Ascending aorta (tissue), 2 donors: ENCODE measurements at regions of chr2 and their contacts with region 1.

Region 1: DNA sequence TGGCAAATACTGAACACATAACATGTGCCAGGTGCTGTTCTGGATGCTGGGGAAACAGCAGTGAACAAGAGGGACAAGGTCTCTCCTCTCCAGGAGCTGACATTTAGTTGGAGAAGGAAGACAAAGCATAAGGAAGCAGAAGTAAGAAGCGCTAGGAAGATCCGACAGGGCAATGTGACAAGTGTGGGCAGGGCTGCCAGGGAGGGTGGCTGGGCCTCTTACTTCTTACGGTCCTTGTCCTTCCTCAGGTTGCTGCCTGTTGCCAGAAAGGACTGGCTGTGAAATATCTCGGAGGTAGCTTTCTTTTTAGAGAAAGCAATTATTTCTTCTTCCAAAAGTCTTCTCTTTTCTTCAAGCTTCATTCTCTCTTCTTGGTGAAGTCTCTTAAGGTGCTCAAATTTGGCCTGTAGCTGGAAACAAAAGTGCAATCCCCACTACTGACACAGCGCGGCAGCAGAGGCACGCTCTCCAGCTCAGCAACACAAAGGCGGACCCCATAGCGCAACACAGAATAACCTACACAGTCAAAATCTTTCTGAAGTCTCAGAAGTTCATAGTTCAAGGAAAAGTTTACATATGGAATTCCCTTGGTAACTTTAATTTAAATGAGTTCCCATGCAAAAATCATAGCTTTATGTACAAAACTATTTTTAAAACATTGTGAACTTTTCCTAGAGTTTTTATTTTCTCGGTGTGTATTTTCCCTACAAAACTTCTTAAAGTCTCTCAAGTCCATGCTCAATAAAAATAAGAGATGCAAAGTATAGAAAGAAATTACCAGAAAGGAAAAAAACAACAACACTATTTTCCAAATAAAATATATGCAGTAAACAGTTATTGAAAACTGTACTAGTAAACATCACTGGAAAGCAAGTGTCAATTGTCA is 67.7 kb downstream of the SEPTIN10 start:
- DNase-seq: peak in 1 of 2 donors; percentile 76
- H3K4me3 ChIP-seq: no peak overlapping the region
- H3K27ac ChIP-seq: no peak overlapping the region
- H3K4me1 ChIP-seq: peaks cover 0 to 3% of the 10 kb centered on the region in 2 donors
- H3K27me3 ChIP-seq: no peaks in the 10 kb centered on the region
- CTCF ChIP-seq: peak; percentile 91 to 96 (median 92)

Region 2: GRCh38 chr2:109084341-109084740 is 461.7 kb before region 1 on chr2:
- intact Hi-C with region 1: no loop called
- DNase-seq: peak in 1 of 2 donors; percentile 12
- H3K4me3 ChIP-seq: no peak overlapping the region
- H3K27ac ChIP-seq: no peak overlapping the region
- H3K4me1 ChIP-seq: no peaks in the 10 kb centered on the region
- H3K27me3 ChIP-seq: no peaks in the 10 kb centered on the region
- CTCF ChIP-seq: no peak

Region 3: DNA sequence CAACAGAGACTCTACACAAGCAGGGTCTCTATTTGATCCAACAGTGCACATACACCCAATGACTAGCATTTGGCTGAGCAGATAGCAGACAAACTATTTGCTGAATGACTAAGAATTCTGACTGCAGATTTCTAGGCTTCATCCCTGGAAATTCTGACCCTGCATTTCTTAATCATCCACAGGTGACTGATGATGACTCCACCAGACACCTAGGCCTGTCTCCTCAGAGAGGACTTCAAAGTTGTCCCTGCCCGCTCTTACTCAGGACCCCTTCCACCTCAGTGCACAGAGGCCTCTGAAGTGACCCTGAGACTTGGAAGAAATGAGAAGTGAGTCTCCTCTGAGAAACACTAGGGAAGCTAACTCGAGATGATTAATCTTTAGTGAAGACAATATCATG is 16.4 kb after region 1 on chr2:
- intact Hi-C with region 1: no loop called
- DNase-seq: no peak
- H3K4me3 ChIP-seq: no peak overlapping the region
- H3K27ac ChIP-seq: no peak overlapping the region
- H3K4me1 ChIP-seq: no peaks in the 10 kb centered on the region
- H3K27me3 ChIP-seq: no peaks in the 10 kb centered on the region
- CTCF ChIP-seq: no peak

Region 4: GRCh38 chr2:109715313-109715805 is 169.3 kb after region 1 on chr2:
- intact Hi-C with region 1: loop called (anchors 1 kb)
- DNase-seq: no peak
- H3K4me3 ChIP-seq: no peak overlapping the region
- H3K27ac ChIP-seq: no peak overlapping the region
- H3K4me1 ChIP-seq: no peaks in the 10 kb centered on the region
- H3K27me3 ChIP-seq: no peaks in the 10 kb centered on the region
- CTCF ChIP-seq: peak; percentile 37 to 63 (median 59)

Region 5: GRCh38 chr2:109736177-109736827 is 190.2 kb after region 1 on chr2:
- intact Hi-C with region 1: loop called (anchors 1 kb)
- DNase-seq: peak in 1 of 2 donors; percentile 83
- H3K4me3 ChIP-seq: no peak overlapping the region
- H3K27ac ChIP-seq: no peak overlapping the region
- H3K4me1 ChIP-seq: no peaks in the 10 kb centered on the region
- H3K27me3 ChIP-seq: no peaks in the 10 kb centered on the region
- CTCF ChIP-seq: peak; percentile 62 to 84 (median 71)